ENCODE measurements at regions of chr14 and their contacts with region 1.

Region 1: DNA sequence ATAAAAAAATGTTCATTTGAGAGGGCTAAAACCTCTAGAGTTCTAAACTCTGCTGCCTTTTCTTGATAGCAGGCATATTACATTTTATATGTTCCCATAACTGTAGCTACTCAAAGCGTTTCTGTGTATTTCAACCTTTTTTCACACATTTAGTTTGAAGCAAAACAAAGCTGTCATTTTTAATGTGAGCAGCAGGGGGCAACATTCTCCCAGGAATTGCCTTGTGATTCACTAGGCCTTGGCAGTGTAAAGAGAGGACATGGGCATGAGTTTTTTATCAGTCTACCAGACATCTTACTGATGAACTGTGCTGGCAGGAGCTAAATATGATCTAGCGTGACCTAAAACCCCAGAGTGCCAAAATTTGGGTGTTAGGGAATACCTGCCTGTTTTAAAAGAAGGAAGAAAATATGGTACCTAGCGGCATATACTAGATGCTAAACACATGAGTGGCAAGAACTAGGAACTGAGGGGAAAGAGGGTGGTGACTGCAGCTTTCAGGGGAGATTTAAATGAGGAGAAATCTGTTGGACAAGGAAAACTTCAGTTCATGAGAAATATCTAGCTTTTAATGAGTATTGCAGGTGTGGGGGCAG is 65.3 kb downstream of the IFT43 start:
- DNase-seq: peak in 8 of 9 donors; percentile 15 to 61 (median 45)
- ATAC-seq: peak; percentile 61
- H3K4me3 ChIP-seq: no peak overlapping the region
- H3K4me3 Mint-ChIP-seq: no peak overlapping the region
- H3K27ac ChIP-seq: no peak overlapping the region
- H3K27ac Mint-ChIP-seq: no peak overlapping the region
- H3K4me1 ChIP-seq: no peaks in the 10 kb centered on the region
- H3K4me1 Mint-ChIP-seq: no peaks in the 10 kb centered on the region
- H3K27me3 ChIP-seq: no peaks in the 10 kb centered on the region
- H3K27me3 Mint-ChIP-seq: no peaks in the 10 kb centered on the region

Region 2: GRCh38 chr14:76067536-76067935 is 16.6 kb after region 1 on chr14:
- CTCF ChIA-PET with region 1: no interaction called
- POLR2A ChIA-PET with region 1: no interaction called
- intact Hi-C with region 1: no loop called
- DNase-seq: no peak
- ATAC-seq: no peak
- H3K4me3 ChIP-seq: no peak overlapping the region
- H3K4me3 Mint-ChIP-seq: no peak overlapping the region
- H3K27ac ChIP-seq: no peak overlapping the region
- H3K27ac Mint-ChIP-seq: no peak overlapping the region
- H3K4me1 ChIP-seq: no peaks in the 10 kb centered on the region
- H3K4me1 Mint-ChIP-seq: no peaks in the 10 kb centered on the region
- H3K27me3 ChIP-seq: no peaks in the 10 kb centered on the region
- H3K27me3 Mint-ChIP-seq: no peaks in the 10 kb centered on the region

Region 3: DNA sequence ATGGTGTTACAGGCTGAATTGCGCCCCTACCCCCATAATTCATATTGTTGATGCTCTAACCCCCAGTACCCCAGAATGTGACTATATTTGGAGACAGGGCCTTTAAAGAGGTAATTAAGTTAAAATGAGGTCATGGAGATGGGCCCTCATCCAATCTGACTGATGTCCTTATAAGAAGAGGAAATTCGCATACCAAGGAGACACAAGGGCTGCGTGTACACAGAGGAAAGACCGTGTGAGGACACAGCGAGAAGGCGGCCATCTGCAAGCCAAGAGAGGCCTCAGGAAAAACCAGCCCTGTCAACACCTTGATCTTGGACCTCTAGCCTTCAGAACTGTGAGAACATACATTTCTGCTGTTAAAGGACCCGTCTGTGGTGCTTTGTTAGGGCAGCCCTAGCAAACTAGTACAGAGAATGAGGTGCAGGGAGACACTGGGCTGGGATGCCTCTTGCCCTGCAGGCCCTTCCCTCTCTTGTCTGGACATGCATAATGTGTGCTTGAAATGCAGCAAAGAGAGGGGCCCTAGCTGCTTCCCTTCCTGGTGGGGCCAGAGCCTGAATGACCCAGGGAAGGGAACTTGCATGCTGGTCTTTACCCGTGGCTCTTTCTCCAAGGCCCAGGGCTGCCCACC is 50.6 kb after region 1 on chr14:
- CTCF ChIA-PET with region 1: no interaction called
- POLR2A ChIA-PET with region 1: no interaction called
- intact Hi-C with region 1: no loop called
- DNase-seq: no peak
- ATAC-seq: no peak
- H3K4me3 ChIP-seq: no peak overlapping the region
- H3K4me3 Mint-ChIP-seq: no peak overlapping the region
- H3K27ac ChIP-seq: no peak overlapping the region
- H3K27ac Mint-ChIP-seq: no peak overlapping the region
- H3K4me1 ChIP-seq: no peaks in the 10 kb centered on the region
- H3K4me1 Mint-ChIP-seq: no peaks in the 10 kb centered on the region
- H3K27me3 ChIP-seq: no peaks in the 10 kb centered on the region
- H3K27me3 Mint-ChIP-seq: peaks cover 5 to 28% (median 16%) of the 10 kb centered on the region in 5 donors

Region 4: DNA sequence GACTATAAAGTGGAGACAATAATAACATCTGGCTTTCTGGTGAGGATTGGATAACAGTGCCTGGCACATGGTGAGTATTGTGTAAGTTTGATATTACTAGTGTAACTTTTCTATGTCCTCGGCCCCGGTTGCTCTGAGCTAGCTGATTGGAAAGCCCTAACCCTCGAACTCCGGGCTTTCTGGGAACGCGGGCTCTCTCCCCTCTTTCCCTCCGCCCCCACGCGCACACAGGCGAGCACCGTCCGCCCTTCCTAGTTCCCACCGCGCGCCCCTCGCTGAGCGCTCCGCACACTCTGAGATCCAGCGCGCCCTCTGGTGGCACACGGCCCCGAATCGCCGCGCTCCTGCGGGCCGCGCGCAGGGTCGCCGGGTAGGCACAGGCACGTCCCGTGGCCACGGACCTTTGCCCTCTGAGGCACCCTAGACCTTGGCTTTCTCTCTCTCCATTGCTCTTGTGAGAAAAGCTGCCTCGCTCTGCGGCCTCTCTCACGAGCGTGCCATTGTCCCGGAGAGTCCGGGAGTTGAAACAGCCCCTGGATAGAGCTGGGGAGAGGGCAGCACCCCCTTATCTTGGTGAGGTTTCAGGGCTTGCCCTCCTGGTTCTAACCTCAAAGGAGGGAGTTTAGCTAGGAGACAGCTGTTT is 301.9 kb after region 1 on chr14:
- CTCF ChIA-PET with region 1: interaction called, 27 read pairs
- POLR2A ChIA-PET with region 1: no interaction called
- intact Hi-C with region 1: loop called in 1 of 2 experiments (anchors 1 kb)
- DNase-seq: peak in 7 of 9 donors; percentile 24 to 70 (median 37)
- ATAC-seq: peak; percentile 58
- H3K4me3 ChIP-seq: no peak overlapping the region
- H3K4me3 Mint-ChIP-seq: peak overlapping the region in 5 of 10 donors; percentile 21 to 69 (median 43)
- H3K27ac ChIP-seq: no peak overlapping the region
- H3K27ac Mint-ChIP-seq: no peak overlapping the region
- H3K4me1 ChIP-seq: no peaks in the 10 kb centered on the region
- H3K4me1 Mint-ChIP-seq: peaks cover 0 to 8% (median 3%) of the 10 kb centered on the region in 7 donors
- H3K27me3 ChIP-seq: no peaks in the 10 kb centered on the region
- H3K27me3 Mint-ChIP-seq: peaks cover 13 to 54% (median 35%) of the 10 kb centered on the region in 5 donors

Region 5: DNA sequence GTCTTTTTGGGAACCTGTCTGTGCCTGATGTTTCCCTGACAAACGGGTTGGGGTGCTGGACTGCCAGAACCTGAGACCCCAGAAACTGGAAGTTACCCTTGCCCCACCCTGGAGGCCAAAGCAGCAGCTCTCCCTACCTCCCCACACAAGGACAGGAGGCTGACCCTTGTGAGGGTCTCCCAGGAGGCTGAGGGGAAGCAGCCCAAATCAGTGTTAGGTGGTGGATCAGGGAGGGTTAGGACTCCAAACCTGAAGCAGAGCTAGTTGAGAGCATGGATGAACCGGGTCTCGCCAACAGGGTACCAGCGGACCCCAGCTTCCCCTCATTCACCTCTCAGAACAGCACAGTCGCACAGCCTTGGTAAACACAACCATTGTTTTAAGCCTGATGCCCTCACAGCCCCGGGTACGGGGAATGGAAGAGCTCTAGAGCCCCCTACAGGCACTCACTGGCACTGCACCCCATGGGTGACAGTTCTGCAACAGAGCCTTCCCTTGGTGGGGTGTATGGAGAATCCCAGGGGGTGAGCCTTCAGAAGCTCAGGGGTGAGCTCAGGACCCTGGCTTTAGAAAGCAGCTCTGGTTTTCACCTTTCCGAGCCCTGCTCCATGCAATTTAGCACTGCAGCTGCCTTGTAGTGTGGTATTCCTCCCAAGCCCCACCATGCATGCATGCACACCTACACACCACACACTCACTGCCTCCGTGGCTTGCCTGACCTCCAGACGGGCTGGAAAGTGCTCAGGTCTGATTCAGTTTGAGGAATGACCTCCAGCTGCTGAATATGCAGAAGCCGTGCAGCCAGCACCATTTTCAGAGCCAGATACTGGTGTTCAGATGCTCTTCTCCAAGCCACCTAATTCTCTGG is 336.3 kb after region 1 on chr14:
- CTCF ChIA-PET with region 1: interaction called, 4 read pairs
- POLR2A ChIA-PET with region 1: no interaction called
- intact Hi-C with region 1: loop called (anchors 1 kb)
- DNase-seq: peak in 8 of 9 donors; percentile 1 to 72 (median 35)
- ATAC-seq: peak; percentile 75
- H3K4me3 ChIP-seq: no peak overlapping the region
- H3K4me3 Mint-ChIP-seq: no peak overlapping the region
- H3K27ac ChIP-seq: no peak overlapping the region
- H3K27ac Mint-ChIP-seq: no peak overlapping the region
- H3K4me1 ChIP-seq: no peaks in the 10 kb centered on the region
- H3K4me1 Mint-ChIP-seq: no peaks in the 10 kb centered on the region
- H3K27me3 ChIP-seq: peaks cover 0 to 7% of the 10 kb centered on the region in 2 donors
- H3K27me3 Mint-ChIP-seq: peaks cover 27 to 58% (median 52%) of the 10 kb centered on the region in 5 donors

Region 6: GRCh38 chr14:76541594-76542219 is 490.8 kb after region 1 on chr14:
- CTCF ChIA-PET with region 1: no interaction called
- POLR2A ChIA-PET with region 1: no interaction called
- intact Hi-C with region 1: loop called in 1 of 2 experiments (anchors 5 kb)
- DNase-seq: no peak
- ATAC-seq: no peak
- H3K4me3 ChIP-seq: no peak overlapping the region
- H3K4me3 Mint-ChIP-seq: peak overlapping the region in 1 of 10 donors; percentile 20
- H3K27ac ChIP-seq: no peak overlapping the region
- H3K27ac Mint-ChIP-seq: peak overlapping the region in 1 of 9 donors; percentile 75
- H3K4me1 ChIP-seq: no peaks in the 10 kb centered on the region
- H3K4me1 Mint-ChIP-seq: peaks cover 0 to 9% (median 0%) of the 10 kb centered on the region in 7 donors
- H3K27me3 ChIP-seq: no peaks in the 10 kb centered on the region
- H3K27me3 Mint-ChIP-seq: peaks cover 9 to 19% (median 14%) of the 10 kb centered on the region in 5 donors